Caco-2 (cell line): ENCODE measurements at regions of chr10 and their contacts with region 1.

Region 1: DNA sequence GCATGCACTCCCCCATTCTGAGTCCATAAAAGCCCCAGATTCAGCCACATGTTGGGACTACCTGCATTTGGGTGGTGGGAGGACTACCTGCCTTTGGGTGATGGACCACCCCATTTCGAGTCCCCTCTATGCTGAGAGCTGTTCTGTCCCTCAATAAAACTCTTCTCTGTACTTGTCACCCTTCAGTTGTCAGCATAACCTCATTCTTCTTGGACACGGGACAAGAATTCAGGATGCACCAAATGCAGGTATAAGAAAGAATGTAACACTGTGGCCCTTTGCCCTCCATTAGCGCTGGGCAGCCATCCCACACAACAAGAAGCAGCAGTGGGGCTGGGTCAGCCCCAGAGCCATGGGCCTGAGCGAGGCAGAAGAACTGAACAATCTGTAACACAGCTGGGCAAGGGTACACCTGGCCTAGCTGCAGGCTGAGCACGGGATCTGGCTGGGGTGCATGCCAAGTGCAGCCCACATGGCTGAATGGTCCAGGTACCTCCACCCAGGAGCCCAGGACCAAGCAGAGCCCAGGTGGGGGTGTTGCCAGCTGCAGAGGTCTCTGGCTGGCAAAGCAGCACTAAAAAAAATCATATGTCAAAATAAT is 1344.3 kb upstream of the LRRTM3 start:
- DNase-seq: peak in 1 of 2 experiments; percentile 28
- H3K4me3 ChIP-seq: no peak overlapping the region
- H3K4me3 Mint-ChIP-seq: no peak overlapping the region
- H3K27ac Mint-ChIP-seq: no peak overlapping the region
- H3K4me1 ChIP-seq: no peaks in the 10 kb centered on the region
- H3K4me1 Mint-ChIP-seq: no peaks in the 10 kb centered on the region
- H3K27me3 ChIP-seq: no peaks in the 10 kb centered on the region
- H3K27me3 Mint-ChIP-seq: no peaks in the 10 kb centered on the region
- CTCF ChIP-seq: no peak

Region 2: GRCh38 chr10:65570143-65571010 is 11.1 kb before region 1 on chr10:
- CTCF ChIA-PET with region 1: no interaction called
- POLR2A ChIA-PET with region 1: no interaction called
- intact Hi-C with region 1: loop called (anchors 1 kb)
- DNase-seq: peak; percentile 87 to 90
- H3K4me3 ChIP-seq: peak overlapping the region; percentile 49
- H3K4me3 Mint-ChIP-seq: peak overlapping the region; percentile 95
- H3K27ac Mint-ChIP-seq: peak overlapping the region; percentile 95
- H3K4me1 ChIP-seq: peaks cover 8% of the 10 kb centered on the region; the same call in 1 of the 2 replicates
- H3K4me1 Mint-ChIP-seq: peaks cover 8% of the 10 kb centered on the region
- H3K27me3 ChIP-seq: no peaks in the 10 kb centered on the region
- H3K27me3 Mint-ChIP-seq: peaks cover 3% of the 10 kb centered on the region
- CTCF ChIP-seq: no peak